AG04450 (cell line): ENCODE measurements at regions of chr7 and their contacts with region 1.

Region 1: GRCh38 chr7:113710310-113711106 is 208.3 kb downstream of the PPP1R3A start:
- DNase-seq: peak; percentile 76
- H3K4me3 ChIP-seq: no peak overlapping the region
- H3K27ac ChIP-seq: no peak overlapping the region
- H3K27me3 ChIP-seq: no peaks in the 10 kb centered on the region
- CTCF ChIP-seq: peak; percentile 98

Region 2: DNA sequence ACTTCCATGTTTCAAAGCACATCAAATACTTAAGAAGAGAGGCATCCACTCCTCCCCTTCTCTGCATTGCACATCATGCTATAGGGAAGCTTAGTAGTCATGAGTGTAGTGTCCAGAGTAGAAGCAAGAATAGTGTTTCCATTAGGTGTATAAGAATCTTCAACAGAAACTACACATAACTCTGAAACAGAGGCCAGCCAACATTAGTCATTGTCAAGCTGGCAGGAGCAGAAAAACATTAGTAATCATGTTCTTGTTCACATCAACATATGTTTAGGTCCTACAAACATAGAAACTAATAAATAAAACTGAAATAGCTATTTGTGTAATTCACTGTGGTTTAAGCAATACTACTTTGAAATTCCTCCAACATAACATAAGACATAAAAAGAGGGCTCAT is 161.9 kb before region 1 on chr7:
- CTCF ChIA-PET with region 1: no interaction called
- POLR2A ChIA-PET with region 1: no interaction called
- DNase-seq: no peak
- H3K4me3 ChIP-seq: no peak overlapping the region
- H3K27ac ChIP-seq: no peak overlapping the region
- H3K27me3 ChIP-seq: no peaks in the 10 kb centered on the region
- CTCF ChIP-seq: no peak

Region 3: GRCh38 chr7:113698556-113699220 is 11.8 kb before region 1 on chr7:
- CTCF ChIA-PET with region 1: interaction called, 10 read pairs
- POLR2A ChIA-PET with region 1: no interaction called
- DNase-seq: peak; percentile 4
- H3K4me3 ChIP-seq: no peak overlapping the region
- H3K27ac ChIP-seq: no peak overlapping the region
- H3K27me3 ChIP-seq: no peaks in the 10 kb centered on the region
- CTCF ChIP-seq: peak; percentile 86

Region 4: GRCh38 chr7:113722006-113722405 is 11.5 kb after region 1 on chr7:
- CTCF ChIA-PET with region 1: interaction called, 27 read pairs
- POLR2A ChIA-PET with region 1: no interaction called
- DNase-seq: no peak
- H3K4me3 ChIP-seq: no peak overlapping the region
- H3K27ac ChIP-seq: no peak overlapping the region
- H3K27me3 ChIP-seq: no peaks in the 10 kb centered on the region
- CTCF ChIP-seq: no peak

Region 5: DNA sequence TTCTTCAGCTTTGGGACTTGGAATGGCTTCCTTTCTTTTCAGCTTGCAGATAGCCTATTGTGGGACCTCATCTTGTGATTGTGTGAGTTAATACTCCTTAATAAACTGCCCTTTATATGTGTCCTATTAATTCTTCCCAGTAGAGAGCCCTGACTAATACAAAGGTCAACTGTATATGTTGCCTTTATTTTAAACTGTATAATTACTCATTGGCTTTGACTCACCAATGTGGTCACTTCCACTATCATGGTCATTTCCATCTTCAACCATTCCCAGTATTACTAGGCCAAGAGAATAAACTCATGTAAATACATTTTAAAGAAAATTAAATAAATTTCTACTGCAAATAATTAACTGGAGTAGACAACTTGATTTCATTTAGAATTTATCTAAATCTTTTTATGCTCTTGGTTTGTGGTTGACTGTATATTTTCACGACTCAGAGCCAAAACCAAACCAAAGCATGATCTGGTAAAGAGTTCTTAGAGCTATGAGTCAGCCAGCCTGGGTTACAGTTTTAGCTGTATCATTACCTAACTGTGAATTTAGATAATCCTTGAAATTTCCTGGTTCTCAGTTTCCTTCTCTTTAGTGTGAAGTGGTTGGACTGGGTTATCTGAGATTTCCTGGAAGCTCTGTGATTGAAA is 19.9 kb after region 1 on chr7:
- CTCF ChIA-PET with region 1: interaction called, 27 read pairs
- POLR2A ChIA-PET with region 1: no interaction called
- DNase-seq: peak; percentile 58
- H3K4me3 ChIP-seq: no peak overlapping the region
- H3K27ac ChIP-seq: no peak overlapping the region
- H3K27me3 ChIP-seq: no peaks in the 10 kb centered on the region
- CTCF ChIP-seq: no peak